ENCODE measurements at regions of chr6 and their contacts with region 1.

Region 1: GRCh38 chr6:20877008-20877937 is 343.0 kb downstream of the CDKAL1 start:
- DNase-seq: peak; percentile 94
- H3K4me3 ChIP-seq: no peak overlapping the region
- H3K27ac ChIP-seq: peak overlapping the region; percentile 85
- H3K4me1 ChIP-seq: peaks cover 38% of the 10 kb centered on the region
- H3K27me3 ChIP-seq: no peaks in the 10 kb centered on the region
- CTCF ChIP-seq: no peak
- POLR2A ChIP-seq: peak; percentile 8

Region 2: DNA sequence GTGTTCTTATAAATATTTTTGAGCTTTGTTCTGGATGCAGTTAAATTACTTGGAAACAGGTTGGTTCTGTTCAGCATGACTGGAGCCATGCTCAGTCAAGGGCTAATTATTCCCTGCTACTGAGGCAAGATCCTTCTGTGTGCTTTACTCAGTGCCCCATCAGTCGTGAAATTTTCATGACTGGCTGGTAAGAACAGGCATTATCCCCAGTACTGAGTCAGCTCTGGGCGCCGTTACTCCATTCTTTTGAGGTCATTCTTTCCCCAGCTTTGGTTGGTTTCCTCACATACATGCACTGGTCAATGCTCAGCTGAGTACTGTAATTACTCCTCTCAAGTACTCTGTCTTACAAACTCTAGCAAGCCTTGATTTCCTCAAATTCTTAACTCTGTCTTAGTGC is 271.7 kb before region 1 on chr6:
- CTCF ChIA-PET with region 1: no interaction called
- POLR2A ChIA-PET with region 1: no interaction called
- dilution Hi-C with region 1: no loop called
- intact Hi-C with region 1: no loop called
- DNase-seq: no peak
- H3K4me3 ChIP-seq: no peak overlapping the region
- H3K27ac ChIP-seq: no peak overlapping the region
- H3K4me1 ChIP-seq: no peaks in the 10 kb centered on the region
- H3K27me3 ChIP-seq: no peaks in the 10 kb centered on the region
- CTCF ChIP-seq: no peak
- POLR2A ChIP-seq: no peak

Region 3: DNA sequence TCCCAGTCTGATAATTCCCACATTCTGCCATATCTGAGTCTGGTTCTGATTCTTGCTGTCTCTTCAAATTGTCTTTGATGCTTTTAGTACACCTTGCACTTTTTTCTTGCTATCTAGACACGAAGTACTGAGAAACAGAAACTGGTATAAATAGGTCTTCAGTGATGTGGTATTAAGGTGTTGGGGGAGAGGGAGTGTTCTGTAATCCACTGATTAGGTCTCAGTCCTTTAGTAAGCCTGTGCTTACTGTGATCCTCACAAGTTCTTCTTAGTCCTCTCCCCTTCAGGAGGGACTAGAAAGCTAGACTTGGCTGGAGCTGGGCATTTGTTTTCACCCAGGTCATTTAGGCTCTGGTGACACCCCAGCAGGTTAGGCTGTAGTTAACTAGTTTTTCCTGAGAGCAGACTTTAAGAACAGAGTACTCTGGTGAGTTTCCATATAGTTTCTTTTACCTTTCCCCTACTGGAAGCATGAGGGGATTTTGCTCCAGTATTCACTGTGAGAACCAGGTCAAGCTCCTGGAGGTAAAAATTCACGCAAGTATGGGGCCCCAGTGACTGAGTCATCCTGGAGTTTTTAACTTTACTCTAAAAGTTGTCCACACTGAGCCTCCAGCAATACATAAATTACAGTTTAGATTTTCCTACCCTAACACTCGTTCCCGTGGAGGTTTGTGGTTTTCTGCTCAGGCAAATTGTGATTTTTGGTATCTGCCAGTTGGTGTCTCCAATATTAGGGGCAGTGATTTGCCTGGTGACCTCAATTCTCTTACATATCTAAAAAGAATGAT is 188.4 kb before region 1 on chr6:
- CTCF ChIA-PET with region 1: no interaction called
- POLR2A ChIA-PET with region 1: interaction called, 10 read pairs
- dilution Hi-C with region 1: no loop called
- intact Hi-C with region 1: no loop called
- DNase-seq: no peak
- H3K4me3 ChIP-seq: no peak overlapping the region
- H3K27ac ChIP-seq: no peak overlapping the region
- H3K4me1 ChIP-seq: no peaks in the 10 kb centered on the region
- H3K27me3 ChIP-seq: no peaks in the 10 kb centered on the region
- CTCF ChIP-seq: no peak
- POLR2A ChIP-seq: no peak

Region 4: DNA sequence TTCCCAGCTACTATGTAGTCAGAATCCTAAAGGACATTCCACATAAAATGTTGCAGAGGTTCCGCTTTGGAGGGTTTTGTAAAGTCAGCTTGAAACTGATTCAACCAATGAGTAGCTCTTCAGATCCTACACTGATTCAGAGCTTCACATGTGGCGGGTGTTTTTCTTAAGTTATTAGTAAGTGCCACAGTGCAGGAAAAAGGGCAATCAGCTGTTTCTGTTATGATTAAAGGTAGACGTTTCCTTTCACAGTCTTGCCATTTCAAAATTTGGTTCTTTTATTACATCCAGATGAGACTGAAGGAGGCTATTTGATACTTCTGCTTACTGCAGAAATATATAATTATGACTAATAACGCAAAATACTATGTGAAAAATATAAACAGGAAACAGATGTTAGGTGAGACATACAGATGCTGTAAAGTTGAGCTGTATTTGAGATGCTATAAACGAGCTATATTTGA is 100.9 kb after region 1 on chr6:
- CTCF ChIA-PET with region 1: interaction called, 3 read pairs
- POLR2A ChIA-PET with region 1: no interaction called
- dilution Hi-C with region 1: no loop called
- intact Hi-C with region 1: loop called (anchors 1 kb)
- DNase-seq: peak; percentile 93
- H3K4me3 ChIP-seq: no peak overlapping the region
- H3K27ac ChIP-seq: peak overlapping the region; percentile 40
- H3K4me1 ChIP-seq: peaks cover 18% of the 10 kb centered on the region
- H3K27me3 ChIP-seq: no peaks in the 10 kb centered on the region
- CTCF ChIP-seq: no peak
- POLR2A ChIP-seq: no peak

Region 5: DNA sequence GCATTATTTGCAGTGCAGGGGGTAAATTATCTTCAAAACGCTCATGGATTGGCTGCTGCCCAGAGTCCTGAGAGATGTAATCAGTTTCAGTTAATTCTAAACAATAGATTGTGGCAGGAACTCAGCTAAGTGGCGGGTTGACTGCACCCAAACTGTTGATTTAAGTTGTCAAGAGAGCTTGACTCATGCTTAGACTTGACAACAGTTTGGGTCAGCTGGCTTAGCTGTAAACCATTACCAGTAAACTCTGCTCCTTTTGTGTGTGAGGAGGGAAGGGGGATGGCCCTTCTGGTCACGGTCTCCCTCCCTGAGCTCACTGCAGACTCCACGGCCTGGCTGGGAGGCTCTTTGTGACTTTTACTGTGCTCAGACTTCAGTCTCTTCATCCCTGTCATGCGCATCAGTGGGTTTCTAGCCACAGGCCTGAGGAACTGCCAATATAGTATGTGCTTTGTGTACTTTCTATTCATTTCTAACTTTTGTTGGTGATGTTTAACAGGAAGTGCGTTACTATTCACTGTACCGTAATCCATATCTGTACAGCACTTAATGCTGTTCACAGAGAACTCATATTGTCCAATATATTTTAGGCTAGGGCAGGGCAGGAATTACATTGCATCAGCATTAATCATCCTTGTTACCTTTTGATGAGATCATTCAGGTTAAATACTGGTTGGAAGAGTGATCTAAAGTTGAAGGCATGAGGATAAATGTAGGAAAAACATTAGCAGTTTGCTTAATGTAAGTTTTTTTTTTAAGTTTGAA is 145.3 kb after region 1 on chr6:
- CTCF ChIA-PET with region 1: interaction called, 5 read pairs
- POLR2A ChIA-PET with region 1: no interaction called
- dilution Hi-C with region 1: no loop called
- intact Hi-C with region 1: loop called (anchors 1 kb)
- DNase-seq: peak; percentile 92
- H3K4me3 ChIP-seq: no peak overlapping the region
- H3K27ac ChIP-seq: peak overlapping the region; percentile 75
- H3K4me1 ChIP-seq: peaks cover 39% of the 10 kb centered on the region
- H3K27me3 ChIP-seq: no peaks in the 10 kb centered on the region
- CTCF ChIP-seq: no peak
- POLR2A ChIP-seq: no peak

Region 6: DNA sequence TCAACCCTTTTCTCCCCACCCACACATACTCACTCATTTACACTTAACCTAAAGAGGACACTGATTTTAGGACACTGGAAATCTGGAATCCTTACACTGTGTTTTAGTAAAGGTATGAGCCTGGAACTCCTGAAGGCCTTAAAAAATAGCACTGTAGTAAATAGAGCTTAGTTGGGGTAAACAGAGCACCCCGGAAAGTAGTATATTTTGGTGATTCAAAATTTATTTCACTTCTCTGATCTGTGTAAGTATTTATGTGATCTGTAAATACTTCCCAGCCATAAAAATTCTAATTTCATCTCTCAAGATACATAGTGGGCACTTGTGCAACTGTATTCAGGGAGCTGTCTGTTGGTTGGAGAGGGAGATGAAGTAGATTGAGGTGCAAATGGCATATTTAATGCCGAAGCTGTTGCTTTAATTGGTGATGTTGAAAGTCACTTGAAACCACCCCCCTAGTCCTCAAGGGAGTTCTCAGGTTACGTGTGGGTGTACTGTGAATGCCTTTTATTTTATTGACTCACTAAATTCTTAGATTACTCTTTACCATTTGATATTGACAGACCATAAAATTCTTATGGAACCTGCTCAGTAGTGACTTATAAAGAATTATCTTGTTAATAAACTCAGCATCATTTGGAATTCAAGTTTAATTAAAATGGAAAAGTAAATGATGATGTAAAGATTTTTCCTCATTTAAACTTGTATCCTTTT is 871.2 kb after region 1 on chr6:
- CTCF ChIA-PET with region 1: no interaction called
- POLR2A ChIA-PET with region 1: no interaction called
- dilution Hi-C with region 1: no loop called
- intact Hi-C with region 1: loop called (anchors 10 kb)
- DNase-seq: no peak
- H3K4me3 ChIP-seq: no peak overlapping the region
- H3K27ac ChIP-seq: no peak overlapping the region
- H3K4me1 ChIP-seq: peaks cover 29% of the 10 kb centered on the region
- H3K27me3 ChIP-seq: no peaks in the 10 kb centered on the region
- CTCF ChIP-seq: no peak
- POLR2A ChIP-seq: no peak